Thyroid gland (tissue), 4 donors: ENCODE measurements at regions of chr15 and their contacts with region 1.

Region 1: DNA sequence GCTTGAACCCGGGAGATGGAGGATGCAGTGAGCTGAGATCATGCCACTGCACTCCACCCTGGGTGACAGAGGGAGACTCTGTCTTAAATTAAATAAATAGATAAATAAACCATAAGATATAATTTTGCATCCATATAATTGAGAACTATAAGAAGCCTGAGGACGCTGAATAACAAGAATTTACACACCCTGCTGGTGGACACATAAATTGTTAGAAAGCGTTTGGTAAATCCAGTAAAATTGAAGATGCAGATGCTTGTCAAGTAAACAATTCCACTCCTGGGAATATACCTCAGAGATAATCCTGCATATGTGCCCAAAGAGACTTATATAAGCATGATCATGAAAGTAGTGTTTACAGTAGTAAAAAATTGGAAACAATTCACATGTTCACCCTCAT is 41.7 kb downstream of the TTC23 start:
- DNase-seq: no peak
- H3K4me3 ChIP-seq: no peak overlapping the region
- H3K27ac ChIP-seq: no peak overlapping the region
- H3K4me1 ChIP-seq: no peaks in the 10 kb centered on the region
- H3K27me3 ChIP-seq: no peaks in the 10 kb centered on the region
- CTCF ChIP-seq: no peak
- POLR2A ChIP-seq: no peak

Region 2: DNA sequence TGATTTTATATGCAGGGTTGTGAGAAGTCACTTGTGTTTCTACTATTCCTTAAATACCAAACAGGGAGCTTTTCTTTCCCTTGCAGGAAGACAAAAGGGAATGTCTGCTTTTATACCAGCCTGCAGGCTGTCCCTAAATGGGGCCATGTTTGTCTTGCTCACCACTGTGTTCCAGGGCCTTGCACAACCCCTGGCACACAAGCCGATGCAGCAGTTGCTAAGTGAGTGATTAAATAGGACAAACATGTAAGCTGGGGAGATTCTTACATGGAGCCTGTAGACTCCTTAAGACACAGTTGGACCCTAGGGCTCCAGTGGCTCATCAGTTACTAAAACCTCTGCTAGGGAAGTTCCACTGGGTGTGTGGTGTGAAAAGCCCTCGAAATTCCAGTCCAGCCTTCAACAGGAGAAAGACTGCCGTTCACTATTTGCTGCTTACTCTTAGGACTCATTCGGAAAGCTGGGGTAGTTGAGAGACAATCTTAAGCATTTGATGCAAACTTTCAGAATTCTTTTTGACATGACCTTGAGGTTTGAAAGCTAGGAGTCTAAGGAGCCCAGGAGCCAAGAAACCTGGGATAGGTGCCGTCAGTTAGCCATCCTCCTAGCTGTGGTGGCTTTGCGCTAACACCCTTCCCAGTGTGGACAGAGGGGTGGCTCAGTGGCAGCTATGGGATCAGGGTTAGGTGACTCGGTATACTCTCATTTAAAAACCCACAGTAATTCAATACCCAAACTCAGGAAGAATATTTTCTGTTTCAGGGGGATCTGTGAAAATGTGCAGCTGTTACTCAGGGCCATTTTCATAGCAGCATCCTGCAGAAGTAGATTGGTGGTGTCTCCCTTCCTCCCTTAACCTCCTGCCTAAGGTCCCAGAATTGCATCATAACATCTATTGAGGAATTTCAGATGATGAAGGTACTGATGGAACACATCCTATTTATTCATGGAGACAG is 63.7 kb before region 1 on chr15:
- intact Hi-C with region 1: no loop called
- DNase-seq: peak; percentile 35 to 56
- H3K4me3 ChIP-seq: no peak overlapping the region
- H3K27ac ChIP-seq: no peak overlapping the region
- H3K4me1 ChIP-seq: peaks cover 0 to 12% of the 10 kb centered on the region in 2 donors
- H3K27me3 ChIP-seq: no peaks in the 10 kb centered on the region
- CTCF ChIP-seq: no peak
- POLR2A ChIP-seq: no peak

Region 3: DNA sequence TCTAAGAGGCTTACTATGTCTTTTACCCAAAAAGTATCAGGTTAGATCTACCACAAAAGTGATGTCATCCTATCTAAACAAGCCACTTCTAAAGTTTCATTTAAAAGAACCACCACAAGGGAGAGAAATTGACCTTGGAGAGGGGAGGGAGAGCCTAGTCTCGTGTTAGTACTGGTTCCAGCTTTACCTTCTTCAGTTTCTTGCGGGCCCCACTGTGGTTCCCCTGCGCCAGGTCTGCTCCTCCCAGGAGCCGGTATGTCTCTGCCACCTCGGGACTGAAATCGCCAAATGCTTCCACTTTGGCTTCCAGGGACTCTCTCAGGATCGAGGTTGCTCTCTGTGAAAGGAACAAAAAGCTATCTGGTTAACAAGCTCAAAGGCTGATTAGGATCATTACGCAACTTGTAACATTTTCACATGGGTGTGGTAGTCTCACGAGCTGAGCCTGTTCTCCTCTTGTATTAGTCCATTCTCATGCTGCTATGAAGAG is 51.7 kb before region 1 on chr15:
- intact Hi-C with region 1: loop called (anchors 10 kb)
- DNase-seq: no peak
- H3K4me3 ChIP-seq: no peak overlapping the region
- H3K27ac ChIP-seq: no peak overlapping the region
- H3K4me1 ChIP-seq: peaks cover 5 to 18% of the 10 kb centered on the region in 2 donors
- H3K27me3 ChIP-seq: no peaks in the 10 kb centered on the region
- CTCF ChIP-seq: no peak
- POLR2A ChIP-seq: no peak